IMR-90 (cell line): ENCODE measurements at regions of chr1 and their contacts with region 1.

Region 1: GRCh38 chr1:156728597-156729462 is at the start of gene ISG20L2:
- DNase-seq: peak; percentile 99
- ATAC-seq: peak; percentile 92
- H3K4me3 ChIP-seq: peak within 1 kb of the TSS; percentile 60
- H3K27ac ChIP-seq: peak within 1 kb of the TSS; percentile 94
- H3K4me1 ChIP-seq: peaks cover 8% of the 10 kb centered on the region
- H3K27me3 ChIP-seq: no peaks in the 10 kb centered on the region
- CTCF ChIP-seq: no peak
- POLR2A ChIP-seq: peak; percentile 89
- RAD21 ChIP-seq: no peak
- total RNA-seq, gene ISG20L2: 13.6 and 17.0 TPM in 2 replicates

Region 2: GRCh38 chr1:156500797-156501499 is 227.9 kb before region 1 on chr1:
- CTCF ChIA-PET with region 1: no interaction called
- POLR2A ChIA-PET with region 1: no interaction called
- dilution Hi-C with region 1: no loop called
- in situ Hi-C with region 1: no loop called
- intact Hi-C with region 1: loop called (anchors 10 kb)
- DNase-seq: peak; percentile 96
- ATAC-seq: peak; percentile 80
- H3K4me3 ChIP-seq: peak overlapping the region; percentile 92
- H3K27ac ChIP-seq: peak overlapping the region; percentile 96
- H3K4me1 ChIP-seq: peaks cover 51% of the 10 kb centered on the region
- H3K27me3 ChIP-seq: no peaks in the 10 kb centered on the region
- CTCF ChIP-seq: peak; percentile 51
- POLR2A ChIP-seq: peak; percentile 86; the same call in 1 of the 2 replicates
- RAD21 ChIP-seq: peak; percentile 36

Region 3: DNA sequence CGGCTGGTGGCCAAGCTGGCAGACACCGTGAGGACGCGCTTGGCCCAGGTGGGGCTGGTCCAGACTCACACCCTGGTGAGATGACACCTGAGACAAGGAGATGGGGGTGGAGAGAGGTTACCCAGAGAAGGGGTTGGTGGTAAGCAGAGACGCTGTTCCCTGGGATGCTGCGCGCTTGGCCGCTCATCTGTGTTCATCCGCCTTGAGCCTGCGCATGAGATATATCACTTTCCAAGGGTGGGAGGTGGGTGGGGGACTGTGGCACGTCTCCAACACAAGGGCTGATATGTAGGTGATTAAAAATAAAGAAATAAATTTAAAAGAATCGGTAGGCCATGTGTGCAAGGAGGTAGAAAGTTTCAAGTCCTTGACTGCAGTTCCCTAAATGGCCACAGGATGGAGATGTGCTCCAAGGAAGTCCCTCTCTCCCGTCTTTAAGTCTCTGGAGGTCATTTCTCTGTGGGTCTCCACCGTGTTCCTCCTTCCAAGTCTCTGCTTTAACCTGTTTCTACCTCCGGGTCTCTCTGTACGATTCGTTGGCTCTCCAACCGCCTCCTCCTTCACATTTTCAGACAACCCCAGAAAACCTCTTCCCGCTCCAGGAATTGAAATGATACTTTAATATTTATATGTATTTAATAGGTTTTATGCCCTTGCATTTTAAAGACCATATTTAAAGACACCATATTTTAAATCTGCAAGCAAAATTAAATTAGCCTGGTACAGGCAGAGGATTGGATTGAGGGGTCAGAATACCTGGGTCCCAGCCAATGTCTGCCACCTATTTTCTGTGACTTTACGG is 144.8 kb before region 1 on chr1:
- CTCF ChIA-PET with region 1: no interaction called
- POLR2A ChIA-PET with region 1: no interaction called
- dilution Hi-C with region 1: no loop called
- in situ Hi-C with region 1: no loop called
- intact Hi-C with region 1: no loop called
- DNase-seq: peak; percentile 84
- ATAC-seq: peak; percentile 98
- H3K4me3 ChIP-seq: no peak overlapping the region
- H3K27ac ChIP-seq: no peak overlapping the region
- H3K4me1 ChIP-seq: no peaks in the 10 kb centered on the region
- H3K27me3 ChIP-seq: peaks cover 18% of the 10 kb centered on the region
- CTCF ChIP-seq: peak; percentile 92
- POLR2A ChIP-seq: no peak
- RAD21 ChIP-seq: peak; percentile 90

Region 4: GRCh38 chr1:156689035-156689952 is 39.5 kb before region 1 on chr1:
- CTCF ChIA-PET with region 1: interaction called, 104 read pairs
- POLR2A ChIA-PET with region 1: no interaction called
- dilution Hi-C with region 1: no loop called
- in situ Hi-C with region 1: loop called (anchors 5 kb)
- intact Hi-C with region 1: loop called (anchors 1 kb)
- DNase-seq: peak; percentile 80
- ATAC-seq: peak; percentile 96
- H3K4me3 ChIP-seq: peak overlapping the region; percentile 13; the same call in 1 of the 2 replicates
- H3K27ac ChIP-seq: no peak overlapping the region
- H3K4me1 ChIP-seq: peaks cover 7% of the 10 kb centered on the region; the same call in 1 of the 2 replicates
- H3K27me3 ChIP-seq: peaks cover 3% of the 10 kb centered on the region; the same call in 1 of the 2 replicates
- CTCF ChIP-seq: peak; percentile 96
- POLR2A ChIP-seq: no peak
- RAD21 ChIP-seq: peak; percentile 98

Region 5: DNA sequence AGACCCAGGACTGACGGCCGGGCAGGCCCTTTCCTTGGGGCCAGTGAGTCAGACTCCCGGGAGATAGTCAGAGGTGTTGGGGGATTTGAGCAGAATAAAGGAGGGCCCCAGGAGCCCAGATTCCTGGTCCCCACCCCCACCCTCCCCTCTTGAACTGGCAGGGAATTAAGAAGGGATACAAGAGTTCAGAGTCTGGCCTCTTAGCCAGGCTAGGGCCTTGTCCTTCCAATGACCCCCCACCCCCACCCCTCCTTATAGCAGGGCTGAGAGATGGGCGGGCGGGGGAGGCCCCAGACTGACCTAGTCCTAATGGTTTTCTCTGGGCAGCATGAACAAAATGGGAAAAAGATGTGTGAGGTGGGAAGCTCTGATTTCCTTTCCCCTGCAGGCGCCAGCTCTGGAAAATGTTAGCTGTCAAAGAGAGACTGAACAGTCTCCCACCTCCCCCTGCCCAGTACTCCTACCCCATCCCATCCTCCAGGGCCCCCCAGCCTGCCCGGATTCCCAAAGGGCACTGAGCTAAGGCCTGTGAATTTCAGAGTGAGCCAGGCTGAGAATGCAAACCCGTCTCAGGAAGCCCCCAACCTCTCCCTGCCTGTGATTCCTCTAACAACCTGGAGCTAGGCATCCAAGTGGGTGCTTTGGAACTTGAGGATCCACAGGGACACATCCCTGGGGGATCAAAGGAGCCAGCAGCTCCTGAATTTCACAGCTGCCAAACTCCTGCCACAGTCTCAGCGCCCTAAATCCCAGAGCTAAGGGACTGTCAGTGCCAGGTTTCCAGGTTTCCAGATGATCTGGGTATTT is 17.6 kb before region 1 on chr1:
- CTCF ChIA-PET with region 1: interaction called, 18 read pairs
- POLR2A ChIA-PET with region 1: no interaction called
- dilution Hi-C with region 1: no loop called
- in situ Hi-C with region 1: no loop called
- intact Hi-C with region 1: loop called (anchors 2 kb)
- DNase-seq: no peak
- ATAC-seq: no peak
- H3K4me3 ChIP-seq: no peak overlapping the region
- H3K27ac ChIP-seq: no peak overlapping the region
- H3K4me1 ChIP-seq: peaks cover 34% of the 10 kb centered on the region
- H3K27me3 ChIP-seq: no peaks in the 10 kb centered on the region
- CTCF ChIP-seq: no peak
- POLR2A ChIP-seq: no peak
- RAD21 ChIP-seq: no peak

Region 6: GRCh38 chr1:156797212-156797871 is 68.5 kb after region 1 on chr1:
- CTCF ChIA-PET with region 1: interaction called, 5 read pairs
- POLR2A ChIA-PET with region 1: interaction called, 3 read pairs
- dilution Hi-C with region 1: no loop called
- in situ Hi-C with region 1: no loop called
- intact Hi-C with region 1: loop called (anchors 1 kb)
- DNase-seq: peak; percentile 64
- ATAC-seq: peak; percentile 69
- H3K4me3 ChIP-seq: no peak overlapping the region
- H3K27ac ChIP-seq: no peak overlapping the region
- H3K4me1 ChIP-seq: peaks cover 9% of the 10 kb centered on the region
- H3K27me3 ChIP-seq: no peaks in the 10 kb centered on the region
- CTCF ChIP-seq: peak; percentile 82
- POLR2A ChIP-seq: no peak
- RAD21 ChIP-seq: peak; percentile 80

Region 7: DNA sequence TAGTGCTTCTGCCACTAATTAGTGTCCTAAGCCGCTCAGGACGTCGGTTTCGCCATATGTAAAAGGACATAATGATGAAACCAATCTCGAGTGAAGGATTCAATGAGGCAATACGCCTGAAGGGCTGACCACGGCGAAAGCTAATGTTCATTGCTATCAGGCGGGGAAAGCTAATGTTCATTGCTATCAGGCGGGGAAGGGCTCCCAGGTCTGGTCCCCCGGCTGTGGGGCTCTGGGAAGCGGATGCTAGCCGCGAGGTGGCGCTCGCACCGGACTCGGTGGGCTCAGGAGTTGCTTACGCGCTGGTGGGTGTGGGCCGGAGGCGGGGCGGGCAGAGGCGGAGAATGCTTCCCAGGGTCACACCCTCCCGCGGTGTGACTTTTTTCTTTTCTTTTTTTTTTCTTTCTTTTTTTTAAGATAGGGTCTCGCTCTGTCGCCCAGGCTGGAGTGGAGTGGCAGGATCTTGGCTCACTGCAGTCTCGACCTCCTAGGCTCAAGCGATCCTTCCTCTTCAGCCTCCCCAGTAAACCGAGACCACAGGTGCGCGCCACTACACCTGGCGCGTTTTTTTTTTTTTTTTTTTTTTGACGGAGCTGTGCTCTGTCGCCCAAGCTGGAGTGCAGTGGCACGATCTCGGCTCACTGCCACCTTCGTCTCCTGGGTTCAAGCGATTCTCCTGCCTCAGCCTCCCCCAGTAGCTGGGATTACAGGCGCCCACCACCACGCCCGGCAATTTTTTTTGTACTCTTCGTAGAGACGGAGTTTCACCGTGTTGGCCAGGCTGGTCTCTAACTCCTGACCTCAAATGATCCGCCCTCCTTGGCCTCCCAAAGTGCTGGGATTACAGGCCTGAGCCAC is 163.6 kb after region 1 on chr1:
- CTCF ChIA-PET with region 1: interaction called, 4 read pairs
- POLR2A ChIA-PET with region 1: interaction called, 3 read pairs
- dilution Hi-C with region 1: no loop called
- in situ Hi-C with region 1: no loop called
- intact Hi-C with region 1: loop called (anchors 1 kb)
- DNase-seq: peak; percentile 85
- ATAC-seq: peak; percentile 67
- H3K4me3 ChIP-seq: peak overlapping the region; percentile 16; the same call in 1 of the 2 replicates
- H3K27ac ChIP-seq: no peak overlapping the region; the same call in 1 of the 2 replicates
- H3K4me1 ChIP-seq: peaks cover 23% of the 10 kb centered on the region
- H3K27me3 ChIP-seq: peaks cover 14% of the 10 kb centered on the region
- CTCF ChIP-seq: peak; percentile 88
- POLR2A ChIP-seq: 0 out of 2 replicates have a peak, but pooled peaks have one; percentile 26
- RAD21 ChIP-seq: peak; percentile 76

Region 8: DNA sequence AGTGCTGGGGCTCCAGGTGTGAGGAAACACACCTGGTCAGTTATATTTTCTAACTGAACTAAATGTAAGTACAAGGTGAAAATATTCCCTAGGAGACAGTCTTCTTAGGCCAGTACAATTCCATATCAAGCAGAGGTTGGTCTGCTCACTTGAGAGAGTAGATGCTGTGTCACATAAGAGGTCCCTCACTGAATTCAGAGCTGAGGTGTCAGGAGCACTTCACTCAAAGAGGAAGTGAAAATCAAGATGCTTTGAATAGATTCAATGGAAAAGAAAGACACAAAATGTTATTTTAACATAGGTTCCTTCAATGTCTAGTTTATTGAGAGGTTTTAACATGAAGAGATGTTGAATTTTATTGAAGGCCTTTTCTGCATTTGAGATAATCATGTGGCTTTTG is 976.0 kb after region 1 on chr1:
- CTCF ChIA-PET with region 1: no interaction called
- POLR2A ChIA-PET with region 1: no interaction called
- dilution Hi-C with region 1: no loop called
- in situ Hi-C with region 1: no loop called
- intact Hi-C with region 1: no loop called
- DNase-seq: no peak
- ATAC-seq: no peak
- H3K4me3 ChIP-seq: no peak overlapping the region
- H3K27ac ChIP-seq: no peak overlapping the region
- H3K4me1 ChIP-seq: no peaks in the 10 kb centered on the region
- H3K27me3 ChIP-seq: no peaks in the 10 kb centered on the region
- CTCF ChIP-seq: no peak
- POLR2A ChIP-seq: no peak
- RAD21 ChIP-seq: no peak